ENCODE measurements at regions of chr21 and their contacts with region 1.

Region 1: GRCh38 chr21:25607151-25608043 is at the start of gene MRPL39:
- DNase-seq: peak; percentile 88
- ATAC-seq: peak; percentile 98
- H3K4me3 ChIP-seq: peak within 1 kb of the TSS; percentile 81
- H3K27ac ChIP-seq: peak within 1 kb of the TSS; percentile 70
- H3K4me1 ChIP-seq: no peaks in the 10 kb centered on the region
- H3K27me3 ChIP-seq: no peaks in the 10 kb centered on the region
- CTCF ChIP-seq: peak; percentile 68
- POLR2A ChIP-seq: peak; percentile 75
- RAD21 ChIP-seq: peak; percentile 50
- total RNA-seq, gene MRPL39: 20.6 and 40.0 TPM in 2 replicates

Region 2: GRCh38 chr21:25700741-25701140 is 93.3 kb after region 1 on chr21:
- CTCF ChIA-PET with region 1: interaction called, 4 read pairs
- POLR2A ChIA-PET with region 1: no interaction called
- dilution Hi-C with region 1: no loop called
- in situ Hi-C with region 1: loop called (anchors 5 kb)
- intact Hi-C with region 1: no loop called
- DNase-seq: no peak
- ATAC-seq: no peak
- H3K4me3 ChIP-seq: no peak overlapping the region
- H3K27ac ChIP-seq: no peak overlapping the region
- H3K4me1 ChIP-seq: no peaks in the 10 kb centered on the region
- H3K27me3 ChIP-seq: no peaks in the 10 kb centered on the region
- CTCF ChIP-seq: no peak
- POLR2A ChIP-seq: no peak
- RAD21 ChIP-seq: no peak

Region 3: GRCh38 chr21:25734904-25735645 is 127.7 kb after region 1 on chr21 and contains the starts of genes ATP5PF and GABPA:
- CTCF ChIA-PET with region 1: interaction called, 3 read pairs
- POLR2A ChIA-PET with region 1: no interaction called
- dilution Hi-C with region 1: no loop called
- in situ Hi-C with region 1: no loop called
- intact Hi-C with region 1: loop called (anchors 1 kb)
- DNase-seq: peak; percentile 99
- ATAC-seq: peak; percentile 88
- H3K4me3 ChIP-seq: peak within 1 kb of the TSS; percentile 53
- H3K27ac ChIP-seq: peak within 1 kb of the TSS; percentile 99
- H3K4me1 ChIP-seq: no peaks in the 10 kb centered on the region
- H3K27me3 ChIP-seq: no peaks in the 10 kb centered on the region
- CTCF ChIP-seq: no peak
- POLR2A ChIP-seq: peak; percentile 62
- RAD21 ChIP-seq: no peak
- total RNA-seq, gene ATP5PF: 74.7 and 76.0 TPM in 2 replicates
- total RNA-seq, gene GABPA: 17.0 and 26.4 TPM in 2 replicates

Region 4: DNA sequence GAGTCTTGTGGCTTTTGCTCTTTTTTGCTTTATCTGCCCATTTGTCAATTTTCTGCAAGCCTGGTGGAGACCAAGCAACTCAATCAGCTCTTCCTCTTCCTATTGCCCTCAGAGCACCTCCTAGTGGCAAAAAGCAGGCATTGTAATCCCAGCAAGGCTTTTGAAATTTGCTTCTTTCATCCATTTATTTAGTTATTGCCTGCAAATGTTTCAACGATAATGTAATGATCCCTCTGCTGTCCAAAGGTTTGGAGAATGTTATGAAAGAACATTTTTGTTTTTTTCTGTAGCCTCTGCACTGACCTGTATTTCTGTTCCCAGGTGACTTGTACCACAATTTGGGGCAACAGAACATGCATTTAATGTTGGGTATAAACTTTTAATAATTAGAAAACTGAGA is 255.2 kb after region 1 on chr21:
- CTCF ChIA-PET with region 1: no interaction called
- POLR2A ChIA-PET with region 1: no interaction called
- dilution Hi-C with region 1: no loop called
- in situ Hi-C with region 1: loop called (anchors 5 kb)
- intact Hi-C with region 1: loop called (anchors 5 kb)
- DNase-seq: peak; percentile 39
- ATAC-seq: no peak
- H3K4me3 ChIP-seq: no peak overlapping the region
- H3K27ac ChIP-seq: no peak overlapping the region
- H3K4me1 ChIP-seq: no peaks in the 10 kb centered on the region
- H3K27me3 ChIP-seq: peaks cover 2% of the 10 kb centered on the region; the same call in 1 of the 2 replicates
- CTCF ChIP-seq: peak; percentile 58
- POLR2A ChIP-seq: no peak
- RAD21 ChIP-seq: peak; percentile 43

Region 5: DNA sequence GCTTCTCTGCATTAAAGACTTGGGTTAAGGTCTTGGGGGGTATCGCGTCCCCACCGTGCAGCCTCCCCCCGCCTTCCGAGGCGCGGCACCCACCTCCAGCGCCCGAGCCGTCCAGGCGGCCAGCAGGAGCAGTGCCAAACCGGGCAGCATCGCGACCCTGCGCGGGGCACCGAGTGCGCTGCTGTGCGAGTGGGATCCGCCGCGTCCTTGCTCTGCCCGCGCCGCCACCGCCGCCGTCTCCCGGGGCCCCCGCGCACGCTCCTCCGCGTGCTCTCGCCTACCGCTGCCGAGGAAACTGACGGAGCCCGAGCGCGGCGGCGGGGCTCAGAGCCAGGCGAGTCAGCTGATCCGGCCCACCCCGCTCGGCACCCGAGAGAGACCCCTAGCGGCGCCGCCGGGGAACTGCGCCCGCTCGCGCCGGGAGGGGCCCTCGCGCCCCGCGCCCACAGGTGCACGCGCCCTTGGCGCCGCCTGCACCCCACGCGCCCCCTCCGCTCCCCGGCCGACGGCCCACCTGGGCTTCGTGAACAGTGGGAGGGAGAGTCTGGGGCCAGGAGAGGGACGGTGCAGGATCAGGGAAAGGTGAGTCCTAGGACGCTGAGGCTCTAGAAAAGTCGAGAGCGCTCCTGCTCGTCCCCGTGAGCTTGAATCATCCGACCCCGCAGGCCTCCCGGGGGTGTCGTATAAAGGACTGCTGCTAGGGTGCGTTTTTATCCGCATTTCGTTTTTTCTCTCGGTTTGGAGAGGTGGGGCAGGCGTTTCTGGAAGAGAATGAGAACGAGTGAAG is 563.3 kb after region 1 on chr21 and contains the start of gene APP:
- CTCF ChIA-PET with region 1: no interaction called
- POLR2A ChIA-PET with region 1: no interaction called
- dilution Hi-C with region 1: no loop called
- in situ Hi-C with region 1: loop called (anchors 25 kb)
- intact Hi-C with region 1: loop called (anchors 5 kb)
- DNase-seq: peak; percentile 70
- ATAC-seq: peak; percentile 79
- H3K4me3 ChIP-seq: peak within 1 kb of the TSS; percentile 62
- H3K27ac ChIP-seq: peak within 1 kb of the TSS; percentile 89
- H3K4me1 ChIP-seq: peaks cover 10% of the 10 kb centered on the region
- H3K27me3 ChIP-seq: no peaks in the 10 kb centered on the region
- CTCF ChIP-seq: peak; percentile 83
- POLR2A ChIP-seq: peak; percentile 58
- RAD21 ChIP-seq: peak; percentile 71
- total RNA-seq, gene APP: 191 and 196 TPM in 2 replicates

Region 6: DNA sequence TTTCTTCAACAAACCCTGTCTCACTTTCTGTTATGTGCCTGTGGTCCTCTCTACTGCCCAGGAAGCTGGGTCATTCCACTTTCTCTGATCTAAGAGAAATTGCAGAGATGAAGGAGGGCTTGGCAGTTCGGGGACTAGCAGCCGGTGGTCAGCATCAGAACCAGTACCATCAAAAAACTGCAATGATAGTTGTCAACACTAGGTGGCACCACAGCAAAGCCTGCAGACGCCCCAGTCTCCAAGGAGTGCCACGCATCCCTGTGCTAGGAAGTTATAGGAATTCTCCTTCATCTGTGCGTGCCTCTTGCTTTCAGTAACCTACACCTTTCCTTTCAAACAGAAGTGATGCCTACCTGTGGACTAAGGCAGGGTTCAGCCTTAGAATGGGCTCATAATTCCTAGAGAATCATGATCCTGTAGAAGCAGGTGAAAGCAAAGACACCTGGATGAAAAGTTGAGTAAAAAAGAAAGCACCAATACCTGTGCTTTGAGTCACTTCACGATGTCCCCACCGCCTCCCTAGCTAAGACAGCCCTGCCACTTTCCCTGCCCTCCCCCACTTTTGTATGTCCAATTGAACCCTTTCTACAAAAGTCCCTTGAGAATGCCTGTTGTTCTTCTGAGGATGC is 1108.6 kb after region 1 on chr21:
- CTCF ChIA-PET with region 1: no interaction called
- POLR2A ChIA-PET with region 1: no interaction called
- dilution Hi-C with region 1: no loop called
- in situ Hi-C with region 1: loop called (anchors 25 kb)
- intact Hi-C with region 1: loop called (anchors 5 kb)
- DNase-seq: peak; percentile 51
- ATAC-seq: peak; percentile 94
- H3K4me3 ChIP-seq: no peak overlapping the region
- H3K27ac ChIP-seq: no peak overlapping the region
- H3K4me1 ChIP-seq: no peaks in the 10 kb centered on the region
- H3K27me3 ChIP-seq: no peaks in the 10 kb centered on the region
- CTCF ChIP-seq: peak; percentile 66
- POLR2A ChIP-seq: no peak
- RAD21 ChIP-seq: peak; percentile 55

Measured in IMR-90 (cell line).